ENCODE measurements at regions of chr12 and their contacts with region 1.

Region 1: DNA sequence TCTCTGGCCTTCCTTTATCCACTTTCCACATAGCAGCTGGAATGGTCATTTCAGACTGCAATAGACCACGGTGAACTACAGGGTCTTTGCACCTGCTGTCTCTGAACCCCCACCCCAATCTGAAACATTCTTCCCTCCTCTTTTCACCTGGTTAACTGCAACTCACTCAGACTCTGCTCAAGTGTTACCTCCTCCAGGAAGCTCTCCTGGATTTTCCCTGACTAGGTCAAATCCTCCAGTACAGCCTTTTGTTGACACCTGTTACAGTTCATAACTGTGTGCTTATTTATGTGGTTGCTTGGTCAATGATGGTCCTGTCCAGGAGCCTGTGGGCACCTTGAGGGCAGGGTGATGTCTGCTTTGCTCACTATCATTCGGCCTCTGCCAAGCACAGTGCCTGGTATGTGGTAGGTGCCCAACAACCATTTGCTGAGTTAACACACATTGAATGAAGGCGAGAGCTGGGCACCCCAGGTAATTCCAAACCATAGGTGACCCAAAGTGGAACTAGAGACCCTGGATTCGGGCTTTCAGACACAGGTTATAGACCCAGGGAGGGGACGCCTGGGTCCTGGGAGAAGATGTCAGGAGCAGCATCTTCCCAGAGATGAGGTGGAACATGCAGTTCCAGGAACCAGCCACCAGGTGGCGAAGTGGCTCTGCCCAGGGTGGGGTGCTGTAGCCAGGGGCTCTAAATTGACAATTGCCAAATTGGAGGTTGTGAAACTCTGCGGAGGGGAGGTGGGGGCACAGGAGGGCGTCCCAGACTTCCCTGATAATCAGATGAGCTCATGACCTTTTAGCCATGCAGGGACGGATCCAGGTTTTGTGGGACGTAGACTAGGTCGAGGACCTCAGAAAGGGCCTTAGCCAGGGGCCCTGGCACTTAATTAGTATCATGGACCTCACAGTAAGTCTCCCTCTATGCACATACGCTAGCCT is 28.1 kb downstream of the TRPV4 start:
- DNase-seq: no peak
- H3K4me3 ChIP-seq: no peak overlapping the region
- H3K27me3 ChIP-seq: no peaks in the 10 kb centered on the region
- CTCF ChIP-seq: peak; percentile 98

Region 2: GRCh38 chr12:109789526-109790048 is 15.5 kb before region 1 on chr12:
- CTCF ChIA-PET with region 1: interaction called, 16 read pairs
- POLR2A ChIA-PET with region 1: no interaction called
- DNase-seq: no peak
- H3K4me3 ChIP-seq: no peak overlapping the region
- H3K27me3 ChIP-seq: no peaks in the 10 kb centered on the region
- CTCF ChIP-seq: no peak

Region 3: GRCh38 chr12:109818905-109819500 is 13.9 kb after region 1 on chr12:
- CTCF ChIA-PET with region 1: interaction called, 20 read pairs
- POLR2A ChIA-PET with region 1: no interaction called
- DNase-seq: peak; percentile 68
- H3K4me3 ChIP-seq: no peak overlapping the region
- H3K27me3 ChIP-seq: no peaks in the 10 kb centered on the region; the same call in 1 of the 2 replicates
- CTCF ChIP-seq: no peak

Region 4: DNA sequence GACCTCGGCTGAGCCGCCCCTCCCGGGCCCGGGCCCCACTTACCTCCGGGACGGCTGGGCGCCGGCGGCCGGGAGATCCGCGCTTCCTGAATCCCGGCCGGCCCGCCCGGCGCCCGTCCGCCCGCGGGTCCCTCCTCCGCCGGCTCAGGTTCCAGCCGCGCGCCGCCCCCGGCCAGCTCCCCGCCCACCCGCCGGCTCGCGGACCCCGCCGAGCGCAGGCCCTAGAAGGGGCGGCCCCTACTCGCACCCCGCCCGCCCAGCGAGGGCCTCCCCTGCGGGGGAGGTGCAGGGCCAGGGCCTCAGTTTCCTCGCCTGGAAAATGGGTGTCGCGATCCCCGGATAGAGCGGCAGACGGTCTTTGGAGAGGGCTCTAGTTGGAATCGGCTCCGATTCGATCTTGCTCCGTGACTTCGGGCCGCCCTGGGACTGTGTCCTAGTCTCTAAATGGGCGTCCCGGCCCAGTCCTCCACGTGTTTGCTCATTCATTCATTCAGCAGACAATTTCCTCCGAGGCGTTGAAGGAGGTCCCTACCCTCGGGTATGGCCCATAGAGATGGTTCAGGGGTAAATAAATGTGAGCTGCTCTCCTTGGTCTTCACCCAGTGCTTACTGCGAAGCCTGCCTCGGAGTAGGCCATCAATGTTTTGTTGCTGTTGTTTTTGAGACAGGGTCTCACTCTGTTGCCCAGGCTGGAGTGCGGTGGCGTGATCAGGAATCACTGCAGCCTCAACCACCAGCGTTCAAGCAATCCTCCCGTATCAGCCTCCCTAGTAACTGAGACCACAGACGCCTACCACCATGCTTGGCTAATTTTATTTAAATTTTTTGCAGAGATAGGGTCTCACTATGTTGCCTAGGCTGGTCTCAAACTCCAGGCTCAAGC is 28.5 kb after region 1 on chr12 and contains the start of gene TRPV4:
- CTCF ChIA-PET with region 1: interaction called, 11 read pairs
- POLR2A ChIA-PET with region 1: no interaction called
- DNase-seq: no peak
- H3K4me3 ChIP-seq: peak within 1 kb of the TSS; percentile 74
- H3K27me3 ChIP-seq: no peaks in the 10 kb centered on the region
- CTCF ChIP-seq: no peak
- polyA plus RNA-seq, gene TRPV4: 7.4 and 13.4 TPM in 2 replicates

Measured in BJ (cell line).